ENCODE measurements at regions of chr1 and their contacts with region 1.

Region 1: DNA sequence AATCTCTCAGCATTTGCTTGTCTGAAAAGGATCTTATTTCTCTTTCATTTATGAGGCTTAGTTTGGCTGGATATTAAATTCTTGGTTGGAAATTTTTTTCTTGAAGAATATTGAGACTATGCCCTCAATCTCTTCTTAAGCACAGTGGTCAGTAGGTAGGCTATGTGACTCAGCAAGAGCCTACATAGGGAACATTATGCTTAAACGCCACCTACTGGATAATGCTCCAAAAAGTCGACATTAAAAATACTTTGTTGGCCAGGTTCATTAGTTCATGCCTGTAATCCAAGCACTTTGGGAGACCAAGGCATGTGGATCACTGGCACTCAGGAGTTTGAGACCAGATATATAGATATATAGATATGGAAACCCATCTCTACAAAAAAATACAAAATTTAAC is 678.0 kb upstream of the USP24 start:
- DNase-seq: peak in 1 of 2 experiments; percentile 43
- H3K4me3 ChIP-seq: no peak overlapping the region
- H3K27ac ChIP-seq: no peak overlapping the region
- H3K4me1 ChIP-seq: peaks cover 5% of the 10 kb centered on the region
- H3K27me3 ChIP-seq: no peaks in the 10 kb centered on the region
- CTCF ChIP-seq: peak; percentile 60

Region 2: GRCh38 chr1:55375617-55376258 is 517.4 kb before region 1 on chr1:
- CTCF ChIA-PET with region 1: no interaction called
- POLR2A ChIA-PET with region 1: no interaction called
- intact Hi-C with region 1: loop called (anchors 1 kb)
- DNase-seq: peak in 1 of 2 experiments; percentile 25
- H3K4me3 ChIP-seq: no peak overlapping the region
- H3K27ac ChIP-seq: no peak overlapping the region
- H3K4me1 ChIP-seq: no peaks in the 10 kb centered on the region; the same call in 1 of the 2 replicates
- H3K27me3 ChIP-seq: no peaks in the 10 kb centered on the region
- CTCF ChIP-seq: peak; percentile 88

Region 3: DNA sequence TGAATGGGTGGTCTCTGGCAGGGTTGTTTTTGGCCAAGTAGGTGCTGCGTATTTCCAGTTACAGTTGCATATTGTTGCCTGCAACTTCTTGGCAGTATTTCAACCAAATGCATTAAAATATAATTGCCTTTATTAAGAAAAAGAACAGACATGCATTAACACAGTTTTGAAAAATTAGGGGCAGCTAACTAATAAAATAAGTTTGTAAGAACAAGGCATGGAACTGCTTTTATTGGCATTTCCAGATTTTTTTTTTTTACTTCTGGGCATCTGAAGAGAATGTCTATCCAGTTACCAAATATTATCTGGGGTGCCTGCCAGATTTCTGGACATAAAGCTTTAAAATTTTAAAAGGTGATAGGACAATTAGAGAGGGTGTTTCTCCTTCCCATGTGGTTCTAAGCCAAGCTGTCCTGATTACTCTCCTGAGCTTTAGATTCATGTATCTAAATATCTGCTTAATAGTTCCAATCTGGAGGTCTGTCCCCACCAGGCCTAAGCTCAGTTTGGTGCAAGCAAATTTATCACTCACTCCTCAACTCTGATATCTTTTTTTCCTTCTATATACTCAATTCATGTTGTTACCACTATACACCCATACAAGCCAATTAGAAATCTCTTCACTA is 124.7 kb before region 1 on chr1:
- CTCF ChIA-PET with region 1: no interaction called
- POLR2A ChIA-PET with region 1: no interaction called
- intact Hi-C with region 1: no loop called
- DNase-seq: no peak
- H3K4me3 ChIP-seq: no peak overlapping the region
- H3K27ac ChIP-seq: no peak overlapping the region
- H3K4me1 ChIP-seq: no peaks in the 10 kb centered on the region
- H3K27me3 ChIP-seq: no peaks in the 10 kb centered on the region
- CTCF ChIP-seq: no peak

Region 4: GRCh38 chr1:56029319-56030003 is 136.3 kb after region 1 on chr1:
- CTCF ChIA-PET with region 1: no interaction called
- POLR2A ChIA-PET with region 1: no interaction called
- intact Hi-C with region 1: loop called (anchors 10 kb)
- DNase-seq: no peak
- H3K4me3 ChIP-seq: no peak overlapping the region
- H3K27ac ChIP-seq: no peak overlapping the region
- H3K4me1 ChIP-seq: peaks cover 4% of the 10 kb centered on the region; the same call in 1 of the 2 replicates
- H3K27me3 ChIP-seq: no peaks in the 10 kb centered on the region
- CTCF ChIP-seq: no peak

Region 5: GRCh38 chr1:56390227-56390867 is 497.2 kb after region 1 on chr1:
- CTCF ChIA-PET with region 1: no interaction called
- POLR2A ChIA-PET with region 1: no interaction called
- intact Hi-C with region 1: no loop called
- DNase-seq: no peak
- H3K4me3 ChIP-seq: no peak overlapping the region
- H3K27ac ChIP-seq: peak overlapping the region; percentile 76
- H3K4me1 ChIP-seq: peaks cover 55% of the 10 kb centered on the region
- H3K27me3 ChIP-seq: no peaks in the 10 kb centered on the region
- CTCF ChIP-seq: no peak

Measured in PC-9 (cell line).